AG04450 (cell line): ENCODE measurements at regions of chr17 and their contacts with region 1.

Region 1: DNA sequence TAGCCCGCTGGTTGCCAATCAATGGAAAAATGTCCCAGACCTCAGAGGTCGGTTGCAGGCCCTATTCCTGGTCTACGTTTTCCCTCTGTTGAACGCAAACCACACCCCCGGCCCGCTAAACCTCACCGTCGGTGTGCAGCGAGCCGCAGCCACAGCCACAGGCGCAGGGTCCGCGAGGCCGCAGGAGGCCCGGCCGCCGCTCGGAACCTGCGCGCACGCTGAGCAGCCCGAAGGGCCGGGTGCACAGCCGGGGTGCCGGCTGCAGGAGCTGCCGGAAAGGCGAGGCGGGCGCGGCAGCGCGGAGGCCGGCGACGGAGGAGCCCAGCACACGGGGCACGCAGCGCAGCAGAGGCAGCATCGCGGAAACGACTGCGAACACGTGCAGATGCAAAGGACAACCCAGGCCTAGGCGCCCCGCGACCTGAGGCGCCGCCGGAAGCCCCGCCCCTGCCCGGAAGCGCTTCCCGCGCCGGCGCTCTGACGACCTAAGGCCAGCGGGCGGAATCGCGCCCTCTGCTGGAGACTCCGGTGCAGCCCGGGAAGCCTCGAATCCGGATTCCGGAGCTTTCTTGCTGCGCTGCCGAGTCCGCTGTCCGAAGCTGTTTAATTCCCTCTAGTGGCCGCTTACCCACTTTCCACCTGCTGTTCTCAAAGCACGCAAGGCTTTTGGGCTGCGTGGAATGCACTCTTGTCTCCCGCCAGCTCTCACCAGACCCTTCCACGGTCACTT is at the start of gene C1QBP:
- DNase-seq: peak; percentile 87
- H3K4me3 ChIP-seq: peak within 1 kb of the TSS; percentile 88
- H3K27ac ChIP-seq: peak within 1 kb of the TSS; percentile 31
- H3K27me3 ChIP-seq: no peaks in the 10 kb centered on the region
- CTCF ChIP-seq: peak; percentile 96
- polyA plus RNA-seq, gene C1QBP: 133 and 175 TPM in 2 replicates

Region 2: GRCh38 chr17:5249615-5250014 is 189.3 kb before region 1 on chr17:
- CTCF ChIA-PET with region 1: interaction called, 70 read pairs
- POLR2A ChIA-PET with region 1: no interaction called
- DNase-seq: peak; percentile 38
- H3K4me3 ChIP-seq: no peak overlapping the region
- H3K27ac ChIP-seq: no peak overlapping the region
- H3K27me3 ChIP-seq: peaks cover 2% of the 10 kb centered on the region
- CTCF ChIP-seq: peak; percentile 72

Region 3: DNA sequence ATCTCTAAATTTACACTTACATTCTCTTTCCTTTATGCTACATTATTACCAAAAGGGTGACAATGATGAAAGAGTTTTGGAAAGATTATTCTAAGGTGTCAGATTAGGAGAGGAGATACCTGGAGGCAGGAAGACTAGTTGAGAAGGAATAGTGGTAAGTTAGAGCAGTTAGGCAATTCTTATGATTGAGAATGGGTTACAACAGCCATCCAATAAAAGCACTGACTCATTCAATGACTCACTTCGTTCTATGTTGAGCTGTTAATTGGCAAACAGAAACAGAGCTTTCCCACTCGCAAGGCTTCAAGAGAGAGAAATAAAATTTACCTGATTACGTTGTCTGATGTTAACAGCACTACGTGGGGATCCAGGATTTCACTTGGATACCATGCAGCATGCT is 25.2 kb before region 1 on chr17:
- CTCF ChIA-PET with region 1: interaction called, 13 read pairs
- POLR2A ChIA-PET with region 1: no interaction called
- DNase-seq: peak; percentile 47
- H3K4me3 ChIP-seq: no peak overlapping the region
- H3K27ac ChIP-seq: peak overlapping the region; percentile 80
- H3K27me3 ChIP-seq: no peaks in the 10 kb centered on the region
- CTCF ChIP-seq: no peak

Region 4: DNA sequence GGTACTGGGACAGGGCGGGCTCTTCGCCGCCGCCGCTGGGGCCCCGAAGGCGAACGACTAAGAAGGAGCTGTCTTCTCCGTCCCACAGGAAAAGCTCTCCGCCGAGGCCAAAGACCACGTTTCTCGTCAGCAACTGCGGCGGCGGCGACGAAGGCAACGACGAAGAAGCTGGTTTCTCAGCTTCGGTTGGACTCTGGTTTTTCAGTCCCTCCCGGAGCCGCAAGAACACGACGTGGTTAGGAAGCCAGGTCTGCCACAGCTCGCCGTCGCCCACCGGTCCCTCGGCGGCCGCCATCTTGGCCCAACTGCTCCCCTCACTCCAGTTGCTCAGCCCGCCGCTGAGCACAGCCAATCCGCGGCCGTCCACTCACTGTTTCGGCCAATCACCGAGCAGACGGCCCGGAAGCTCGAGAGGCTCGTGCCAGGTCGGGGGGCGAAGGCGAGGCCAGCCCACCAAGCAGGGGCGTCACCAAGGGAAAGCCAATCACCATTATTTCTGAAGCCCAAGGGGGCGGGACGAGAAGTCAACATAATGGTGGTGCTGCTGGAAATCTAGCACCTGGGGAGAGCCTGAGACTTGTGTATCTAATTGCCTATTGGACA is 19.4 kb before region 1 on chr17 and contains the start of gene NUP88:
- CTCF ChIA-PET with region 1: interaction called, 31 read pairs
- POLR2A ChIA-PET with region 1: interaction called, 10 read pairs
- DNase-seq: peak; percentile 92
- H3K4me3 ChIP-seq: peak within 1 kb of the TSS; percentile 87
- H3K27ac ChIP-seq: peak within 1 kb of the TSS; percentile 88
- H3K27me3 ChIP-seq: no peaks in the 10 kb centered on the region
- CTCF ChIP-seq: no peak
- polyA plus RNA-seq, gene NUP88: 67.9 and 74.7 TPM in 2 replicates

Region 5: GRCh38 chr17:5468075-5468473 is 29.2 kb after region 1 on chr17:
- CTCF ChIA-PET with region 1: interaction called, 10 read pairs
- POLR2A ChIA-PET with region 1: interaction called, 7 read pairs
- DNase-seq: no peak
- H3K4me3 ChIP-seq: peak overlapping the region; percentile 90
- H3K27ac ChIP-seq: peak overlapping the region; percentile 13
- H3K27me3 ChIP-seq: no peaks in the 10 kb centered on the region
- CTCF ChIP-seq: no peak

Region 6: DNA sequence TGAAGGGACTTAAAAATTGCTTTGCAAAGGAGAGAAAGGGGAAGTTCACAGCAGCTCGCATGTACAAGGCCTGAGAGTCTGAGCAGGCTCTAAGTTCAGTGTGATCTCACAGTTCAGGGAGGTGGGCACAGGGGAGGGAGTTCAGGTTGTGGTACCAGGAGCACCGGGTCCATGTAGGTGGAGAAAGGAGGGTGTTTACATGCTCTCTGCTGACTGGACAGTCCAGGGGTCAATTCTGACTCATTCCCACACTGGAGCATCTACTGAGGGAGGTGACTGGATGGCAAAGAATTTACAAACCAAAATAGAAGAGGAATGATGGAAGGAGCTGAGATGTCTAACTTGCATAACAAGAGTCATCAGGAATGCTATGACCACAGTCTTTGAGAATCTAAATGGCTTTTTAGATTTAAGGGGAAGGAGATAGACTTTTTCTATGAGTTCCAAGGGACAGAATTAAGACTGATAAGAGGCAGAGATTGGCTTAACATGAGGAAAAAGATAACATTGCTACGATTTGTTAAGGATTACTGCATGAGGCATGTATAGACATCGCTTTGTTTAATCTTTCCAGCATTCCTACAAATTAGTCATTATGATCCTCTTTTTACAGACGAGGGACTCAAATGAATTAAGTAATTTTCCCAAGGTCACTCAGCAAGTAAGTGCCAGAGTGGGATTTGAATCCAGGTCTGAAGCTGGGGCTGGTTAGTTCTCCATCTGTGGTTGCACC is 77.3 kb after region 1 on chr17:
- CTCF ChIA-PET with region 1: no interaction called
- POLR2A ChIA-PET with region 1: no interaction called
- DNase-seq: peak; percentile 97
- H3K4me3 ChIP-seq: no peak overlapping the region
- H3K27ac ChIP-seq: peak overlapping the region; percentile 95
- H3K27me3 ChIP-seq: no peaks in the 10 kb centered on the region
- CTCF ChIP-seq: no peak

Region 7: DNA sequence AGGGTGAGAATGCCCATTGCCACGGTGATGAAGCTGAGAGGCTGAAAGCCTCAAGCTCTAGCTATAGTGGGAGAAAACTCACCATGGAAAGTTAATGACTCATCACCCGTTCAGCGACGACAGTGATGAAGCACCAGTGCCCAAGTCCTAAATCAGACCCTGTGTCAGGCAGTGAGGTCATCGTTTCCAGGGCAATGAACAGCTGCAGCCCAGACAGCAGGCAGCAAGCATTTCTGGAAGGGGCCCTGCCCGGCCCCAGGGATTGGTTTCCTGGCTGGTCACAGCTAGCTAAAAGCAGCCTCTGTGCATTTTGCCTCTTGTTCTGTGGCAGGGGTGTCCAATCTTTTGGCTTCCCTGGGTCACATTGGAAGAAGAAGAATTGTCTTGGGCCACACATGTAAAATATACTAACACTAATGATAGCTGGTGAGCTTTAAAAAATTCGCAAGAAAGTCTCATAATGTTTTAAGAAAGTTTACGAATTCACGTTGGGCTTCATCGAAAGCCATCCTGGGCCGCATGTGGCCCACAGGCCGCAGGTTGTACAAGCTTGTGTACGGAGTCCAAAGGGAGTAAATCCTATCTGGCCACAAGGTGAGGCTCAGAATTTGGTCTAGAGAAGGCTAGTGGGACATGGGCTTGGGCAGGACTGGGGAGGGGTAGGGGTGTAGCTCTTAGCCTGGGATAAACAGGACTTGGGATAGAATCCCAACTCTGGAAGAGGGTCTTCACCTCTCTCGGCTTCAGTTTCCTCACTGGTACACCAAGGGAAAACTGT is 88.1 kb after region 1 on chr17:
- CTCF ChIA-PET with region 1: interaction called, 10 read pairs
- POLR2A ChIA-PET with region 1: no interaction called
- DNase-seq: peak; percentile 91
- H3K4me3 ChIP-seq: no peak overlapping the region
- H3K27ac ChIP-seq: peak overlapping the region; percentile 81
- H3K27me3 ChIP-seq: no peaks in the 10 kb centered on the region
- CTCF ChIP-seq: no peak